Vagina (tissue), 2 donors: ENCODE measurements at regions of chr2 and their contacts with region 1.

Region 1: DNA sequence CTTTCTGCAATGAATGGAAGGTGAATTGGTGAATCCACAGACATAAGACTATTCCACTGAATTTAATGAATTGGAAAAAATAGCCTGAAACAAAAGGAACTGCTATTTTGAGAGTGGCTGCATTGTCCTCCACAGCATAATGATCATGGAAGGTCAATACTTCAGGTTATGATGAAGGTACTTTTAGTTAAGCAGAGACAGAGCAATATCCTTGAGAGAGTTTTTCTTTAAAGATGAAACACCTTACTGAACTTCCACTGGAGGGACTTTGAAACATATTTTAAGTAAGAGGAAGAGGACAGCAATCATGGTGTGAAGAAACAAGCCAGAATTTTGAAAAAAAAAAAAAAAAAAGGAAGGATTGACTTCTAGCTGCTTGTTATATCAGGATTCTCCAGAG is 68.8 kb upstream of the DPP10 start:
- DNase-seq: no peak
- H3K4me3 ChIP-seq: no peak overlapping the region
- H3K27ac ChIP-seq: no peak overlapping the region
- H3K4me1 ChIP-seq: no peaks in the 10 kb centered on the region
- H3K27me3 ChIP-seq: no peaks in the 10 kb centered on the region
- CTCF ChIP-seq: no peak
- POLR2A ChIP-seq: no peak

Region 2: DNA sequence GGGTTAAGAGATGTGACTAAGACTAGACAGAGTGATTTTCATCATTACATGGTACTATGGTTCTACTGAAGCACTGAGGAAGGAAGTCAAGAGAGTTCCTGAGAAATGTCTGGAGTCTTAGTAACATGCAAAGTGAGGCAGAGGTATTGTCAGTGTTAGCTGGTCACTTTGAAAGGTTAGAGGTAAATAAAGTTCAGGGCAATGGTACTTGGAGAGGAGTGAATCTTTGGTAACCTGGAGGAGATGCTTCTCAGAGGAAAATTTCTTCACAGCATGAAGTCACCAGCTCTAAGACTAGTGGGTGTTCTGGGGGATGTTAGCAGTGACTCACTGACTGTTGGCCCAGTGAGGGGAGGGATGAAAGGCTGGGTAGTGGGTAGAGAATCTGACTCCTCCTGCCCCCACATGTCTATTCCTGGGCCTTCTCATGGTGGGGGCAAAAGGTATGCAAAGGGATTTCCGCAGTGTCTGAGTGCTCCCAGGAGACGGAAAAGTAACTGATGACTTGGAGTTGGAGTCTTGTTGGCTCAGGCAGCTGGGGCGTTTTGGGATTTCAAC is 1269.5 kb before region 1 on chr2:
- intact Hi-C with region 1: loop called (anchors 5 kb)
- DNase-seq: no peak
- H3K4me3 ChIP-seq: no peak overlapping the region
- H3K27ac ChIP-seq: no peak overlapping the region
- H3K4me1 ChIP-seq: no peaks in the 10 kb centered on the region
- H3K27me3 ChIP-seq: no peaks in the 10 kb centered on the region
- CTCF ChIP-seq: no peak
- POLR2A ChIP-seq: no peak

Region 3: GRCh38 chr2:114354199-114354598 is 19.4 kb before region 1 on chr2:
- intact Hi-C with region 1: no loop called
- DNase-seq: no peak
- H3K4me3 ChIP-seq: no peak overlapping the region
- H3K27ac ChIP-seq: no peak overlapping the region
- H3K4me1 ChIP-seq: no peaks in the 10 kb centered on the region
- H3K27me3 ChIP-seq: no peaks in the 10 kb centered on the region
- CTCF ChIP-seq: no peak
- POLR2A ChIP-seq: no peak